GM10248 (cell line): ENCODE measurements at regions of chr21 and their contacts with region 1.

Region 1: DNA sequence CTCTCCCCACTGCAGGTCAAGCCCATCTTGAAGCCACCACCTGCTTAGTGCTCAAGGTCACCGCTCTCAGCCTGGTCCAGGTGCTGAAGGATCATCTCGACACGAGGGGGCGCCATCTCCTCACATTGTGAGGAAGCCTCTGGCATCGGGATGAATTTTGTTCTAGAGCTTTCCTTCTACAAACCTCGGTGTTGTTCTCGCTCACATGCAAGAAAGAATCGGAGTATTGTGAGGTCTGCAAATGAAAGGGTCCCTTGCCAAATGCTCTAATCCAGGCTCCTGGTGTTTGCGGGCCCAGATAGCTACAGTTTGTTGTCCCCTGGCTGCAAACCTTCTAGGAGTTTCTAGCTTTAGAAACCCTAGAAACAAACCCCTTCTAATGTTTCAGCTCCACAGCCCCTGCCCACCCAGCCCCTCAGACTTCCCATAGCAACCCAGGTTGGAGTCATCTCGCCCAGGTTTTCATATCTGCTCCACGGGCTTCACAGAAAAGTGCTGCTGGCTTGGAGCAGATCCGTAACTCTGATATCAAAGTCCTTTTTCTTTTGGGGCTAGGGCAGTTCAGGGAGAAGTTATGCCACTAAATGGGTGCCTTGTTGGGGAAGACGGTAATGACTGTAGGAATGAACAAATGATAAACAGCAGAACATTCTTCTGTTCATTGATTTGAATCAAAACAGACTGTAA is 8.6 kb upstream of the ATP5PO start:
- DNase-seq: peak; percentile 79
- CTCF ChIP-seq: peak; percentile 94

Region 2: DNA sequence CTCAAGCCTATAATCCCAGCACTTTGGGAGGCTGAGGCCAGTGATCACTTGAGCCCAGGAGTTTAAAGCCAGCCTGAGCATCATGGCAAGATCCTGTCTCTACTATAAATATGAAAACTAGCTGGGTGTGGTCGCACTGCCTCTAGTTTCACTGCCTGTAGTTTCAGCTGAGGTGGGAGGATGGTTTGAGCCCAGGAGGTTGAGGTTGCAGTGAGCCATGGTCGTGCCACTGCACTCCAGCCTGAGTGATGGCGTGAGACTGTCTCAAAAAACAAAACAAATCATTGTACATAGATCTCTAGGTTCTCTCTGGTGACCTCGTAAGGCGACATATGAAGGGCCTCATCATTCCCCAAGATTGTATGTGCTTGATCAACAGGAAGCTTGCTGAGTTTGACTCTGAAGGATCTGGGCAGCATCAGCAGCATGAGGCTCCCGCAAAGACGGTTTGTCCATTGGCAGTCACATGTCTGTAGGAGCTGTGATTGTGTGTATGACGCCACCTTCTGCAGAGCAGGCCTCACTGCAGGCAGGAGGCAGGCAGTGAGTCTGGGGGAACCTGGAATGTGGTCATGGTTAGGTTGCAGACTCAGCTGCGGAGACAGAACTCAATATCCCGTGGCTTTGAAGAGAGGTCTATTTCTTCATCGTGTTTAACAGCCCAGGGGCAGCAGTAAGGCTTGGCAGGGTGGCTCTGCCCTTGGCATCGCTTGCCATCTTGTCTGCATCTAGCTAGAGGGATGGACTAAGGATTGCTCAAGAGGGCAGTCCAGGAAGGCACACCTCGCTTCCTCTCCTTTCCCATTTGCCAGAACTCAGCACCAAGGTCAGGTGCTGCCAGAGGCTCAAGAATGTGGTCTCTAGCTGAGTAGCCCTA is 22.6 kb before region 1 on chr21:
- CTCF ChIA-PET with region 1: interaction called, 18 read pairs
- POLR2A ChIA-PET with region 1: no interaction called
- DNase-seq: no peak
- CTCF ChIP-seq: peak; percentile 31

Region 3: GRCh38 chr21:33954395-33954794 is 30.2 kb after region 1 on chr21:
- CTCF ChIA-PET with region 1: interaction called, 31 read pairs
- POLR2A ChIA-PET with region 1: no interaction called
- DNase-seq: no peak
- CTCF ChIP-seq: no peak

Region 4: GRCh38 chr21:33976082-33977016 is 52.1 kb after region 1 on chr21:
- CTCF ChIA-PET with region 1: interaction called, 18 read pairs
- POLR2A ChIA-PET with region 1: interaction called, 4 read pairs
- DNase-seq: peak; percentile 63
- CTCF ChIP-seq: no peak

Region 5: DNA sequence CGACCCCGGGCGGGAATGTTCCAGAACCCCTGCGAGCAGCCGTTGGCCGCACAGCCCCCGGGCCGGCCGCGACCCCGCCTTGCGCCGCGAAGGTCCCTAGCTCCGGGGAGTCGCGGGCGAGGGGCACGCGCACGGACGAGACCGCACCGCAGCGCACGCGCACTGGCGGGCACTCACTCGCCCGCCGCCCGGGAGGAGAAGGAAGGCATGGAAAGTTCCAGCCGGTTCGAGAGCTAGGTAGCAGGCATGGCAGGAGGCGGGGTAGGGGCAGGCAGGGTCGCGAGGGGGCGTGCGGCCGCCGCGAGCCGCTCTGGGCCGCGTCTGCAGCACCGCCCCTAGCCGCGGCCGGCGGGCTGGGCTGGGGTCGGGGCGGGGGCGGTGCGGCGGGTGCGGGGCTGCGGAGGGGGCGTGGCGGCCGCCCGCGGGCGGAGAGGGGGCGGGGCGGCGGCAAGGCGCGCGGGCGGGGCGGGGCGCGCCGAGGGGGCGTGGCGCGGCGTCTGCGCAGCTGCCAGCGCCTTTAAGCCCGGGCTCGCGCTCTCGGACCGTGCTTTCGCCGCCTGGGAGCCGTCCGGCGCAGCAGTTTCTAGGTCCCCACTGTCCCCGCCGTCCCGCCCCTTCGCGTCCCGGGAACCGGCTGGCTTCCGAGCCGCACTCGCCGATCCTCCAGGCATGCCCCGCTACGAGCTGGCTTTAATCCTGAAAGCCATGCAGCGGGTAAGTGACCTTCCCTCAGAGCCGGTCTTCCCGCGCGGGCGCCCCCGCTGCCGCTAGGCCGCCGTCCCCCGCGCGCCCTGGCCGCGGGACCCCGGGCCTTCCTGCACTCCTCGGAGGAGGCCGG is 149.0 kb after region 1 on chr21 and contains the starts of genes MRPS6 and SLC5A3:
- CTCF ChIA-PET with region 1: interaction called, 20 read pairs
- POLR2A ChIA-PET with region 1: no interaction called
- DNase-seq: peak; percentile 91
- CTCF ChIP-seq: peak; percentile 24

Region 6: DNA sequence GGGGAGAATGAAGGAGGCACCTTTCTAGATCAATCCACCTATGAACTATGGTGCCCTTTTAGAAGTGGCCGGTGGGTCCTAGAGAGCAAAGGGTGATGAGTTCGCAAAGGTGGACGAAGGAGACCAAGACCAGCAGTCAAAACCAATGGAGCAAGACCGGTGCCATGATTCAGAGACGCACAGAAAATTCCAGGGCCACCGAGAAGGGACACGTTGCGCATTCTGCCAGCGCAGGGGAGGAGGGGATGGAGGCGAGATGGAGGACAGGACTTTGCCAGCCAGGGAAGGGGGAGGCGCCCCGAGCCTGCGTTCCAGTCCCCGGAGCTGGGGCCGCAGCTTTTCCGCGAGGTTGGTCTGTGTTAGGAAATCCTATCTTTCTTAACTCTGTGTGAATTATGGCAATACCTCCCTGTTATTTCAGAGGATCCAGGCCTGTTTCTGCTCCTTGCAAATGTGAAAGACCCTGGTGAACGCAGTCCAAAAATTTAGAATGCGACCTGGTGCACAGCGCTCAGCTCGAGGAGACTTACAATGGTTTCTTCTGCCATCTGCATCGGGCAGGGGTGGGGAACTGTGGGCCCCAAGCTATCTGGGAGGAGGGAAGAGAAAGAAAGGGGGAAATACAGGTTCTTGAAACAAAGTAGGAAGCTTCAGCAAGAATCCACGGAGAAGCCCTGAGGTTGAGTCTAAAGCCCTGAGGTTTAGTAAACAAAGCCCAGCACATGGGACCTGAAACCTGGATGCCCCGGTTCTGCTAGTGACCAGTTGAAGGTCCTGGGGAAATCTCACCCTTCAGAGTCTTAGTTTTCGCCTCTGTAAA is 278.5 kb after region 1 on chr21:
- CTCF ChIA-PET with region 1: interaction called, 54 read pairs
- POLR2A ChIA-PET with region 1: interaction called, 4 read pairs
- DNase-seq: no peak
- CTCF ChIP-seq: no peak

Region 7: DNA sequence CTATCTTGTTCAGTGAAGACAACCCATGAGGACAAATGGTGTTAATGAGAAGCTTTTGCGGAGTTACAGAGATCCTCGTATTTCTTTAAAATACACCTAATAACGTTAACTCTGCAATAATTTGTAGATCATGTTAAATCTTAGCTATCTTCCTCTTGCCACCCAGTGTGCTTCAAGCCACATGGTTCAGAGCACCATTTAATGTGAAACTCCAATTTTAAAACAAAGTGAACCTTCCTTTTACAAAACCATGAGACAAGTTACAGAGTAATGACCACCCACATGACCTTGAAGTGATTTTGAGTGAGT is 437.9 kb after region 1 on chr21:
- CTCF ChIA-PET with region 1: interaction called, 368 read pairs
- POLR2A ChIA-PET with region 1: no interaction called
- DNase-seq: no peak
- CTCF ChIP-seq: no peak